HepG2 (cell line): ENCODE measurements at regions of chr11 and their contacts with region 1.

Region 1: GRCh38 chr11:121067453-121067852 is 33.6 kb upstream of the TECTA start:
- DNase-seq: peak; percentile 97
- ATAC-seq: peak; percentile 99
- H3K4me3 ChIP-seq: peak overlapping the region in 1 of 3 experiments; percentile 15; a peak in 1 of 6 replicates
- H3K27ac ChIP-seq: peak overlapping the region; percentile 98
- H3K4me1 ChIP-seq: peaks cover 63% of the 10 kb centered on the region
- H3K27me3 ChIP-seq: no peaks in the 10 kb centered on the region
- CTCF ChIP-seq: no peak
- EP300 ChIP-seq: peak in 1 of 2 experiments; percentile 89; a peak in 3 of 4 replicates
- POLR2A ChIP-seq: peak; percentile 43 to 89; a peak in 3 of 4 replicates
- RAD21 ChIP-seq: no peak

Region 2: DNA sequence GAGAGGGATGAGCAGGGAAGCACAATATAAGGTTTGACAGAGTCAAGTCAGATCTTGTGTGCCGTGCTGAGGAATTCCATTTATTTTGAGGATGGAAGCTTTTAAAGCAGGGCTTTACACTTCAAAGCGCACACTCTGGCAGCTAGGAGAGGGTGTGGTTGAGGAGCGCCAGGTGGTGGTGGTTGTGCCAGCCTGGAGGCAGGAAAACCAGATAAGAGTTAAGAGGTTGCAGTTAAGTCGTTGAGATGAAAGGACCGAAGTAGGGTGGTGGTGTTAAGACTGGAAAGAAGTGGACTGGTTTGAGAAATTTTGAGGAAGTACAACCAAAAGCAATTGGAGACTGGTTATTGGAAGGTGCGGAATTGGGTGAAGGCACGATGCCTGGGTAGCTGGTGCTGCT is 275.1 kb before region 1 on chr11:
- CTCF ChIA-PET with region 1: no interaction called
- POLR2A ChIA-PET with region 1: no interaction called
- in situ Hi-C with region 1: no loop called
- intact Hi-C with region 1: no loop called
- DNase-seq: no peak
- ATAC-seq: no peak
- H3K4me3 ChIP-seq: no peak overlapping the region
- H3K27ac ChIP-seq: no peak overlapping the region
- H3K4me1 ChIP-seq: no peaks in the 10 kb centered on the region
- H3K27me3 ChIP-seq: peaks cover 4 to 39% of the 10 kb centered on the region in 2 experiments; a peak in 4 of 5 replicates
- CTCF ChIP-seq: no peak
- EP300 ChIP-seq: no peak
- POLR2A ChIP-seq: no peak
- RAD21 ChIP-seq: no peak

Region 3: DNA sequence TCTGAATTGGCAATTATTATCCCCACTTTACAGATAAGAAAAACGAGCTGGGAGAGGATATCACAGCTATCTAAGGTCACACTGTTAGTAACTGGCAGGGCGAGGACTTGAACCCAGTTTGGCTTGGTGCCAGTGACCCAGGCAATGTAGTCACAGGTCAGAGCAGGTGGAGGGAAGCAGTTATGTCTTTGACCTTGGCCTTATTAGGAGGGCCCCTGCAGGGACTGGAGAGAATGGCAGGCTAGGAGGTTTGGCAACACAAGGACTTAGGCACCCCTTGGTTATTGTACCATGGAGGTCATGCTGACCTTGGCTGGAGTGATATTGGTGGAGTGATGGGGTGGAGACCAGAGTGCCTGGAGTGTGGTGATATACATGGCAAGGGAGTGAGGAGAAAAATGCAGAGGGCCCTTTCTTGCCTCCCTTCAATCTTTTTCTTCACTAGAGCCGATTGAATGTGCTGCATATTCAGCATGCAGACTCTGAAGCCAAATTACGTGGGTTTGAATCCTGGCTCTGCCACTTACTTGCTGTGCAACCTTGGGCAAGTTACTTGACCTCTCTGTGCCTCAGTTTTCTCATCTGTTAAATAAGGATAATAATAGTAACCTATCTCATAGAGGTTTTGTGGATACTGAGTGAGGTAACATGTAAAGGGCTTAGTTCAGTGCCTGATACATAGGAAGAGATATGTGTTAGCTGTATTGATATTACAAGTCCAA is 136.2 kb before region 1 on chr11:
- CTCF ChIA-PET with region 1: no interaction called
- POLR2A ChIA-PET with region 1: no interaction called
- in situ Hi-C with region 1: no loop called
- intact Hi-C with region 1: no loop called
- DNase-seq: peak; percentile 35
- ATAC-seq: peak; percentile 46
- H3K4me3 ChIP-seq: no peak overlapping the region
- H3K27ac ChIP-seq: no peak overlapping the region
- H3K4me1 ChIP-seq: no peaks in the 10 kb centered on the region
- H3K27me3 ChIP-seq: no peaks in the 10 kb centered on the region
- CTCF ChIP-seq: peak; percentile 39
- EP300 ChIP-seq: no peak
- POLR2A ChIP-seq: no peak
- RAD21 ChIP-seq: no peak

Region 4: DNA sequence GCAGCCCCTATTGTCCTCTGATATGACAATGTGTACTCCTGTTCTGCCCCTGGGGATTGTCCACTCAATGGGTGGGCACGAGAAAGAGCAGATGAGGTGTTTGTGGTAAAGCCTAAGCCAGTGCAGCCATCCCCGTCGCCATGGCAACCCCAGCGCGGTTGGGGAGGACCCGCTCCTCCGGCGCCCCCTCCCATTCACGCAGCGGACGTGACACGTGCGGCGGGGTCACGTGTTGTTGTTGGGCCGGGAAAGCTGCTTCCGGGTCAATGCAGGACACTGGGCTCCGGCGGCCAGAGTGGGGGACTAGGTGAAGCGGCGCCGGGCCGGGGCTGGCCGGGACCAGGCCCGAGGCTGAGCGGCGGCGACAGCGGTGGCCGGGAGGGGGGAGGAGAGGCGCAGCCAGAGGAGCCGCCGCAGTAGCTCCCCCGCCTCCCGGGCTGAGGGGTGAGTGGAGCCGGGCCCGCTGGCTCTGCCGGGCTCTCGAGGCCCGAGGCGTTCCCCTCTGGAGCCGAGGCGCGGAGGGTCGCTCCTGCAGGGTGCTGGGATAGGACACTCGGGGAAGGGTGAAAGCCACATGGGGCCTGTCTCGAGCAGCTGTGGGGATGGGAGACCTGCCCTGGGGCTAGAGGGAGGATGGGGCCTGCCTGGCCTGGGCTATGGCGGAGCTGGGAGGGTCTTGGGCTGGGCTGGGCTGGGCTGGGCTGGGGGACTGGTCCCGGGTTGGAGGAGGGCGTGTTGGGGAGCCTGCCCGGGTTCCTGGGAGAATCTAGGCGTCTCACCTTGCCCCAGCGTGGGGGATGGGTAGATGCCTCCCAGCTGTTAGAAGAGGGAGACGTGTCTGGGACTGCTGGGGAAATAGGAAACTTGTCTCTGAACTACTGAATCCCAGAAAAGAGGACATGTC is 43.4 kb before region 1 on chr11 and contains the start of gene TBCEL:
- CTCF ChIA-PET with region 1: no interaction called
- POLR2A ChIA-PET with region 1: interaction called, 15 read pairs
- in situ Hi-C with region 1: no loop called
- intact Hi-C with region 1: no loop called
- DNase-seq: peak; percentile 83
- ATAC-seq: peak; percentile 96
- H3K4me3 ChIP-seq: peak within 1 kb of the TSS; percentile 84 to 96 (median 84)
- H3K27ac ChIP-seq: peak within 1 kb of the TSS; percentile 58
- H3K4me1 ChIP-seq: peaks cover 21% of the 10 kb centered on the region
- H3K27me3 ChIP-seq: no peaks in the 10 kb centered on the region; a peak in 1 of 5 replicates
- CTCF ChIP-seq: no peak
- EP300 ChIP-seq: no peak
- POLR2A ChIP-seq: peak in 1 of 2 experiments; percentile 51; a peak in 2 of 4 replicates
- RAD21 ChIP-seq: peak; percentile 51; the same call in 1 of the 2 replicates
- total RNA-seq, gene TBCEL: 12.5 and 12.8 TPM in 2 replicates

Region 5: DNA sequence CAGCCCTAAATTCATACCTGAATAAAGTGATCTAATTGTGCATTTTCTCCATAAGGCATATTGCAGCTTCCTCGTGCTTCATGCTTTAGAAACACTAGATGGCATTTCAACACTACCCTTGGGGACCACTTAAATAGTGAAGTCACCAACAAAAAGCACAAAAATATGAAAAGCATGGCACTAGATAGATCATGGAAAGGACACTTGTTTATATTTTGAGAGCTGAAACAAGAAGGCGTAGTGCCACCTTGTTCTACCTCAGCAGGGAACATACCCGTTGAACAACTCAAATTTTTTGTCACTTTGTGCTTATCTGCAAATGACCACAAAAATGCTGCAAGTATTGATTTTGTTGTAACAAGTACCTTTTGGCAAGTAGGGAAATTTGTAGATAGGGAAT is 34.9 kb before region 1 on chr11:
- CTCF ChIA-PET with region 1: no interaction called
- POLR2A ChIA-PET with region 1: no interaction called
- in situ Hi-C with region 1: no loop called
- intact Hi-C with region 1: loop called (anchors 5 kb)
- DNase-seq: peak; percentile 21
- ATAC-seq: no peak; the same call in 1 of the 3 replicates
- H3K4me3 ChIP-seq: no peak overlapping the region
- H3K27ac ChIP-seq: no peak overlapping the region
- H3K4me1 ChIP-seq: peaks cover 20% of the 10 kb centered on the region
- H3K27me3 ChIP-seq: no peaks in the 10 kb centered on the region
- CTCF ChIP-seq: peak; percentile 64
- EP300 ChIP-seq: no peak
- POLR2A ChIP-seq: no peak
- RAD21 ChIP-seq: 0 out of 2 replicates have a peak, but pooled peaks have one; percentile 27

Region 6: DNA sequence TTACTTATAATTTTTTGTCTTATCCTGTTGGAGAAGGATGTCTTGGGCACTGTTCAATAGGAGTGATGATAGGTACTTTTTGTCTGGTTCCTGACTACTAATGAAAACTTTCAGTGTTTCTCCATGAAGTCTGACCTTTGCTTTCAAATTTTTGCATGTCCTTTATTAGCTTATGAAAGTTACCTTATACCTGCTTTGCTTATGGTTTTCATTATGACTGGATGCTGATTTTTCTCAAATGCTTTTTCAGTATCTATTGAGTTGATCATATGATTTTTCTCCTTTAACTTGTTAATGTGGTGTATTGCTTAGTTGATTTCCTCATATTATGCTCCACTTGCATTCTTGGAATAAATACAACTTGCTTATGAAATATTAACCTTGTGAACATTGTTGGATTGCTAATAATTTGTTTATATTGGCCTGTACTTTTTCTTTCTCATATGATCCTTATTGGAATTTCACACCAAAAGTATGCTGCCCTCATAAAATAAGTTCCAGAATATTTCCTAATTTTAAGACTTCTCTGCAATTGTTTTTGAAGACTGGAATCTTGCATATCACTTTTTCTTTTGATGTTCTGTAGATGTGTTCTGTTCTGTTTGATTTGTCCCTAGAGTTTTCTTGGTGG is 140.1 kb after region 1 on chr11:
- CTCF ChIA-PET with region 1: no interaction called
- POLR2A ChIA-PET with region 1: no interaction called
- in situ Hi-C with region 1: no loop called
- intact Hi-C with region 1: no loop called
- DNase-seq: no peak
- ATAC-seq: no peak
- H3K4me3 ChIP-seq: no peak overlapping the region
- H3K27ac ChIP-seq: no peak overlapping the region
- H3K4me1 ChIP-seq: no peaks in the 10 kb centered on the region
- H3K27me3 ChIP-seq: no peaks in the 10 kb centered on the region
- CTCF ChIP-seq: no peak
- EP300 ChIP-seq: no peak
- POLR2A ChIP-seq: no peak
- RAD21 ChIP-seq: no peak